Esophagus muscularis mucosa (tissue), 4 donors: ENCODE measurements at regions of chr6 and their contacts with region 1.

Region 1: DNA sequence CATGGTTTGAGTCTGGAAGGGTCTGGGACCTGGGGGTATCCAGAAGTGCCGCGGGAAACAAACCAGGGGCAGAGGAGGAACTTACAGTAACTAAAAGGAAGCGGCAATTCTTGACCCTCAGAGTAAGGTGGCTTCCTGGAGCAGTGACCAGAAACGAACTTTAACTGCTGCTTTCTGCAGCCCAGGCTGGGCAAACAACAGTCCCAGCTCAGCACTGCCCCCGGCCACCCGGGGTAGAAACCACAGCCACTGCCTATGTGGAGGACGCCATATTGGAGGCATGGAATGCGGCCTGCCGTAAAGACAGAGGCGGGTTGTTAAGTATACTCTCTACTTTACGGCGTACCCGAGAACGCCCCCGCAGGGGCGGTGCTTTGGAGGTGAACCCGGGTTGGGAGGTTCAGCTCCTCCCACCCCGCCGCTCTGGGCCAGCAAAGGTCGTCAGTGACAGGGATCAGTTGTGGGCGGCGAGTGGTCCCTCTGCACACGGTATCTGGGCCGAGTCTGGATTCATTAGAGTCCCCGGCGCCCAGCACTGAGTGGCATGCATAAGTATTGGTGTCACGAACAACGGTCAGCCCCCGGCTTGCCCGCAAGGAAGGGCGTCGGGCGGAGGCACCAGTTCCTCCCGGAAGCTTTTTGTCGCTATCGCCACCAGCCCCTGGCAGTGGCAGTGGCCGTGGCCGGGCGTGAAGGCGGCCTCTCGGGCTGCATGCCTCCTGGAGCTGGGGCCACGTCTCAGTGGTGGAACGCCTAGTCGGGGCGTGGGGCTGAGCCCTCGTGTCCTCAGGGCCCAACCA is at the start of gene PDSS2:
- DNase-seq: peak; percentile 97
- H3K4me3 ChIP-seq: peak within 1 kb of the TSS; percentile 69 to 84 (median 70)
- H3K27ac ChIP-seq: peak within 1 kb of the TSS; percentile 80 to 89 (median 87)
- H3K4me1 ChIP-seq: peaks cover 8 to 24% (median 20%) of the 10 kb centered on the region in 4 donors
- H3K27me3 ChIP-seq: no peaks in the 10 kb centered on the region
- CTCF ChIP-seq: peak; percentile 11 to 50 (median 22)
- EP300 ChIP-seq: no peak
- POLR2A ChIP-seq: peak; percentile 43
- total RNA-seq, gene PDSS2: 6.6 to 10.8 (median 8.7) TPM

Region 2: GRCh38 chr6:107657755-107658461 is 198.4 kb after region 1 on chr6:
- intact Hi-C with region 1: loop called (anchors 10 kb)
- DNase-seq: no peak
- H3K4me3 ChIP-seq: peak overlapping the region in 2 of 4 donors; percentile 5 to 22
- H3K27ac ChIP-seq: peak overlapping the region in 2 of 4 donors; percentile 16 to 43
- H3K4me1 ChIP-seq: peaks cover 19 to 28% (median 24%) of the 10 kb centered on the region in 4 donors
- H3K27me3 ChIP-seq: no peaks in the 10 kb centered on the region
- CTCF ChIP-seq: peak in 1 of 3 experiments; percentile 30
- EP300 ChIP-seq: no peak
- POLR2A ChIP-seq: no peak